PC-9 (cell line): ENCODE measurements at regions of chr2 and their contacts with region 1.

Region 1: GRCh38 chr2:164992818-164993217 is 37.5 kb upstream of the SLC38A11 start:
- DNase-seq: peak; percentile 14 to 64
- H3K4me3 ChIP-seq: no peak overlapping the region
- H3K27ac ChIP-seq: no peak overlapping the region
- H3K4me1 ChIP-seq: no peaks in the 10 kb centered on the region
- H3K27me3 ChIP-seq: no peaks in the 10 kb centered on the region
- CTCF ChIP-seq: peak; percentile 65

Region 2: DNA sequence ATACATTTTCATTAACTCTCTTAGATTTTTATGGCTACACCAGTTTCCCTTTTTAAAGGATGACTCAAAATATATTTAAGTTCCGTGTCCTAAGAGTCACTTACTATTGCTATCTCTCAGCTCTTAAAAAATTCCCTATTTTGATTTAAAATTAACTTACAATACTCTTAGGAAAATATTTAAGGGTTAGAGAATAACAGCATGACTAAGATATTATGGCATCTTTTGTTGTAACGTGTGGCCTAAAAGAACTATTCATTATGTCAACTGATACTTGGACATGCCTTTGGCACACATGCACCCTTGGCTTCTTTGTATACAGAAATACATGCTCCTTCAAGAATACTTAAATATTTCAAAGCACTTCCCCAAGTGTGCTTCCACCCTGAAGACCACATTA is 168.7 kb after region 1 on chr2:
- CTCF ChIA-PET with region 1: no interaction called
- POLR2A ChIA-PET with region 1: no interaction called
- intact Hi-C with region 1: no loop called
- DNase-seq: no peak
- H3K4me3 ChIP-seq: no peak overlapping the region
- H3K27ac ChIP-seq: no peak overlapping the region
- H3K4me1 ChIP-seq: no peaks in the 10 kb centered on the region
- H3K27me3 ChIP-seq: no peaks in the 10 kb centered on the region
- CTCF ChIP-seq: no peak

Region 3: GRCh38 chr2:165182029-165182428 is 189.2 kb after region 1 on chr2:
- CTCF ChIA-PET with region 1: interaction called, 14 read pairs
- POLR2A ChIA-PET with region 1: no interaction called
- intact Hi-C with region 1: no loop called
- DNase-seq: no peak
- H3K4me3 ChIP-seq: no peak overlapping the region
- H3K27ac ChIP-seq: no peak overlapping the region
- H3K4me1 ChIP-seq: no peaks in the 10 kb centered on the region
- H3K27me3 ChIP-seq: no peaks in the 10 kb centered on the region
- CTCF ChIP-seq: no peak